Activated CD4-positive, alpha-beta memory T cell treated with anti-CD3 and anti-CD28 coated beads for 36 hours (primary cell): ENCODE measurements at regions of chr1 and their contacts with region 1.

Region 1: DNA sequence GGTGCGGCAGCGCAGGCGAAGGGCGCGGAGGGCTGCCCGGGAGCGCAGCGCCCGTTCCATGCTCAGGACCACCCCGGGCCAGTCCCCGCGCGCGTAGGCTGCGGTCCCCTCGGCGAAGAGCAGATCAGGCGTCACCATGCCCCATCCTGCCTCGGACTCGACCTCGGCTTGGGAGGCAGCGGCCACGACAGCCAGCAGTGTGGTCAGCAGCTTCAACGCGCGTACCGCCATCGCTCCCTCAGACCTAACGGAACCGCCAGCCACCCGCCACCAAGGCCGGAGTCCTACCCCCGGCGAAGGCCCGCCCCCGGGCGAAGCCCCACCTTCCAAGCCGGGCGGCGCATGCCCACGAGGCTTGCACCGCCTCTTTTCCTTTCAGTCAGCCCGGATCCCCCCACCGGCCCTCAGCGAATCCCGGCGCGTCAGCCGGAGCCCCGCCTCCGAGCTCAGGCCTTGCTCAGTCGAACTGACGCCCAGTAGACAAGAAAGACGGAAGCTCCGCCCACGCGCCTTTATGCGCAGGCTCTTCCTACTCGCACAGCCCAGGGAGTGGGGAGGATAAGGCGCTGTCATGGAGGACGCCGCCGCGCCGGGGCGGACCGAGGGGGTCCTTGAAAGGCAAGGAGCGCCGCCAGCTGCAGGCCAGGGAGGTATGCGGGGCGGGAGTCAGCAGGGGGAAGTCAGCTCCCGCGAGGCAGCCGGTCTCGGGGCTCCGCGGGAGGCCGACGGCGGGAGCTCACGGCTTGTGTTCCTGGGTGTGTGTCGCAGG is at the starts of genes C1orf50 and P3H1:
- DNase-seq: peak; percentile 100
- H3K4me3 Mint-ChIP-seq: no peak within 1 kb of the TSS
- H3K27ac Mint-ChIP-seq: peak within 1 kb of the TSS; percentile 78
- H3K4me1 Mint-ChIP-seq: peaks cover 31% of the 10 kb centered on the region
- H3K27me3 Mint-ChIP-seq: no peaks in the 10 kb centered on the region
- total RNA-seq, gene C1orf50: 5.6 to 7.6 TPM
- total RNA-seq, gene P3H1: 32.0 to 34.8 TPM

Region 2: DNA sequence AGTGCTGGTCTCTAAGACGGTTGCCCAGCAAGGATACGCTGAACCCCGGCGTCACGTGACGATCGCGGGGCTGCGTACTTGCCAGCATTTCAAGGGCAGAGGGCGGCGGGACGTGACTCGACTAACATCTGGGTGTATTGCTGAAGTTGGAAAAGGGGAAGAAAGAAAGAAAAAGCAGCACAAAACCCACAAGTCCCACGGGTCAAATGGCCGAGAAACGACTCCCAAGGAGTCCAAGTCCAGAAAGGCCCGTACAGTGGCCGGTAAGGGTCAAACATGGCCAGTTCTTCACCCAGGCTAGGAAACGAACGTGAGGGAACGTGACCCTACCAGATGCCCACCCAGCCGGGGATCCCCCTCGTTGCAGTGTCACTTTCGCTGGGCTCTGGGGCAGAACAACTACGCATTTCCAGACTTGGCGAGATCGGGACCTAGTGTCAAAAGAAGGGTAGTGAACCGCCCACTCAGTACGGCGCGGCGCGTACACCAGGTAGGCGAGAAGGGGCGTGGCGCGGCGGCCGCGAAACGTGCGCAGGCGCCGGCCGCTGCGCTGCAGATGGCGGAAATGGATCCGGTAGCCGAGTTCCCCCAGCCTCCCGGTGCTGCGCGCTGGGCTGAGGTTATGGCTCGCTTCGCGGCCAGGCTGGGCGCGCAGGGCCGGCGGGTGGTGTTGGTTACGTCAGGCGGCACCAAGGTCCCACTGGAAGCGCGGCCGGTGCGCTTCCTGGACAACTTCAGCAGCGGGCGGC is 310.7 kb before region 1 on chr1 and contains the starts of genes PPCS and ZMYND12:
- CTCF ChIA-PET with region 1: no interaction called
- POLR2A ChIA-PET with region 1: no interaction called
- intact Hi-C with region 1: loop called (anchors 5 kb)
- DNase-seq: peak; percentile 95
- H3K4me3 Mint-ChIP-seq: peak within 1 kb of the TSS; percentile 79
- H3K27ac Mint-ChIP-seq: peak within 1 kb of the TSS; percentile 91
- H3K4me1 Mint-ChIP-seq: peaks cover 23% of the 10 kb centered on the region
- H3K27me3 Mint-ChIP-seq: no peaks in the 10 kb centered on the region
- total RNA-seq, gene PPCS: 50.8 to 52.3 TPM
- total RNA-seq, gene ZMYND12: 0.97 to 1.3 TPM

Region 3: DNA sequence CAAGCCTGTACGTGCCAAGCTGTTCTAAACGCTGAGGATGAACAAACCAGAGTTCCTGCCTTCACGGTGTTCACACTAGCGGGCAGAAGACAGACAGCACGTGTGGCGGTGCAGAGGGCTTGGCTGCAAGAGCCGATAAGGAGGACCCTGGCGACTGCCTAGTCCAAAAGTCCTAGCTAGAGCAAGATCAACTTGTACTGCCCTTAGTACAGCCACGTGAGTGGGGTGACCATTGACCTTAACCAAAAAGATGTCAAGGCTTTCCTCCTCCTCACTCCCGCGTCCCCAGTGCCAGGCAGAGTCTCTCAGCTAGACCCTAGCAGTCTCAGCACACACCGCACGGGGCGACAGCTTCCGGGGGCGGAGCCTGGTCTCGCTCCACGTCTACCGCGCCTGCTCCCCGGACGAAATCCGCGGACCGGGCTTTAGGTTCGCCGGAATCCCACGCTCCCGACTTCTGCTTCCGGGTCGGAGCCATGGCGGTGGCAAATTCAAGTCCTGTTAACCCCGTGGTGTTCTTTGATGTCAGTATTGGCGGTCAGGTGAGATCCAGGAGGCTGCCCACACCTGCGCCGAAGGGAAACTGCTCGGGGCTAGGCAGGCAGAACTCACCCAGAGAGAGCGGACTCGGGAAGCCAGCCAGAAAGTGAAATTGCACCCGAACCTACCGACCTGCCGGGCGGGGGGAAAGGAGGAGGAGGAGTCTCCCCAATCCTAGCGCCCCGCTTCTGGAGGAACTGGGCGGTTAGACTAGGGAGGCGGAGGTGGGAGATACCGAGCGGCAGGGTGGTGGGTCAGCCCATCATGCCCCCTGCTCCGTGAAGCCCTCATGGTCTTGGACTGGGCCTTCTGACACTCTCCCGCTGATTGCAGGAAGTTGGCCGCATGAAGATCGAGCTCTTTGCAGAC is 108.7 kb before region 1 on chr1 and contains the start of gene PPIH:
- CTCF ChIA-PET with region 1: interaction called, 5 read pairs
- POLR2A ChIA-PET with region 1: interaction called, 8 read pairs
- intact Hi-C with region 1: loop called (anchors 1 kb)
- DNase-seq: peak; percentile 97
- H3K4me3 Mint-ChIP-seq: peak within 1 kb of the TSS; percentile 98
- H3K27ac Mint-ChIP-seq: peak within 1 kb of the TSS; percentile 95
- H3K4me1 Mint-ChIP-seq: peaks cover 37% of the 10 kb centered on the region
- H3K27me3 Mint-ChIP-seq: no peaks in the 10 kb centered on the region
- total RNA-seq, gene PPIH: 91.0 to 94.0 TPM

Region 4: DNA sequence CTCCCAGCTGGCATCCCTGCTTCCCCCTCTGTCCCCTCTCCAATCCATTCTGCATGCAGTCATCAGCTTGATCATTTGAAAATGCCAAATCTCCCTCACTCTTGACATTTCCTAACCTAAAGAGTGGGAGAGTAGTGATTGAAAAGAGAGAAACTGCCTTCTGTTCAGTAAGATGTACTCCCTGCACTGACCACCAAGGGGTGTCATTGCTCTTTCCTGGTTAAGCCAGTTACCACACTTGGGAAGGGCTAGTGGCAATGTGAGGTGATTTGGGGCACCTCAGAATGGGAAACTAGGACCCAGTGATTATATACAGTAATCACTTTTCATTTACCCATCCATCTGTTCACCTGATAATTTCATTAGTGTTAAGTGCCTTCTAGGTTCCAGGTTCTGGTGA is 10.9 kb after region 1 on chr1:
- CTCF ChIA-PET with region 1: interaction called, 23 read pairs
- POLR2A ChIA-PET with region 1: interaction called, 7 read pairs
- intact Hi-C with region 1: no loop called
- DNase-seq: peak; percentile 41
- H3K4me3 Mint-ChIP-seq: no peak overlapping the region
- H3K27ac Mint-ChIP-seq: no peak overlapping the region
- H3K4me1 Mint-ChIP-seq: peaks cover 20% of the 10 kb centered on the region
- H3K27me3 Mint-ChIP-seq: no peaks in the 10 kb centered on the region

Region 5: GRCh38 chr1:42846257-42847110 is 79.6 kb after region 1 on chr1 and contains the start of gene ZNF691:
- CTCF ChIA-PET with region 1: interaction called, 20 read pairs
- POLR2A ChIA-PET with region 1: interaction called, 29 read pairs
- intact Hi-C with region 1: loop called (anchors 1 kb)
- DNase-seq: peak; percentile 94
- H3K4me3 Mint-ChIP-seq: peak within 1 kb of the TSS; percentile 89
- H3K27ac Mint-ChIP-seq: peak within 1 kb of the TSS; percentile 72
- H3K4me1 Mint-ChIP-seq: peaks cover 44% of the 10 kb centered on the region
- H3K27me3 Mint-ChIP-seq: no peaks in the 10 kb centered on the region
- total RNA-seq, gene ZNF691: 8.6 to 9.5 TPM

Region 6: GRCh38 chr1:42924082-42924850 is 157.3 kb after region 1 on chr1:
- CTCF ChIA-PET with region 1: interaction called, 7 read pairs
- POLR2A ChIA-PET with region 1: interaction called, 8 read pairs
- intact Hi-C with region 1: loop called (anchors 5 kb)
- DNase-seq: peak; percentile 95
- H3K4me3 Mint-ChIP-seq: peak overlapping the region; percentile 89
- H3K27ac Mint-ChIP-seq: peak overlapping the region; percentile 97
- H3K4me1 Mint-ChIP-seq: peaks cover 22% of the 10 kb centered on the region
- H3K27me3 Mint-ChIP-seq: no peaks in the 10 kb centered on the region

Region 7: DNA sequence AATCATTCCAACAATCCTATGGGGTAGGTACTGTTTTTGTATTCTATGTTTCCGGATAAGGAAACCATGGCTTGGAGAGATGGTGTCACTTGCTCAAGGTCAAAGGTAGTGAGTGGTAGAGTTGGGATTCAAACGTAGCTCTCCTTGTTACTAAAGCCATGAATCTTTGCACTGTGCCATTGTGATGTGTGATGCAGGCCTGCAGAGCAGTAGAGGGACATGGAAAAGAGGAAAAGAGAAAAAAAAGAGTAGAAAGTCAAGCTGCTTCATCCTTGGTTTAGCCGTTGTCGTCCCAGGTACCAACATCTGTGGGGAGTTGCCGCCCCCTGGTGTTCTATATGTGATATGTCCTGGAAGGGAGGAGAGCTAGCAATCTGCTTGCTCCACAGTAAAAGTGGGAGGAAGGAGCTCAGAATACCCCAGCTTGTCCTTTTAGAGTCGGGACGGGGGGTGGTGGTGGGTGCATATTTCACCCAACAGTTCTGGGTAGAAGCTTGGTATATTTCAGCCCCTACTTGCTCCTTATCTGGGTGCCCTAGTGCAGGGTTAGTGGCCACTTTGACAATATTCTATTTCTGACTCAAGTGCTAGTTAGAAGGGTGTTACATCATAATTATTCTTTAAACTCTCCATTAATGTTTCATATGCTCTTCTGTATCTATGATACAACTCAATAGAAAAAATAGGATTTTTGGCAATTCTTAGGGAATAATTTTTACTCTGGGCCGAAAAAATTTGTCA is 306.7 kb after region 1 on chr1:
- CTCF ChIA-PET with region 1: interaction called, 29 read pairs
- POLR2A ChIA-PET with region 1: interaction called, 3 read pairs
- intact Hi-C with region 1: no loop called
- DNase-seq: peak; percentile 80
- H3K4me3 Mint-ChIP-seq: no peak overlapping the region
- H3K27ac Mint-ChIP-seq: no peak overlapping the region
- H3K4me1 Mint-ChIP-seq: peaks cover 4% of the 10 kb centered on the region
- H3K27me3 Mint-ChIP-seq: no peaks in the 10 kb centered on the region